Heart left ventricle (tissue), 16 donors: ENCODE measurements at regions of chr1 and their contacts with region 1.

Region 1: GRCh38 chr1:10867138-10867721 is 70.8 kb upstream of the CASZ1 start:
- DNase-seq: peak; percentile 42 to 77 (median 57)
- ATAC-seq: peak in 3 of 4 donors; percentile 38 to 81 (median 77)
- H3K4me3 ChIP-seq: peak overlapping the region in 11 of 12 donors; percentile 18 to 61 (median 49)
- H3K27ac ChIP-seq: peak overlapping the region in 2 of 12 donors; percentile 23 to 65
- H3K4me1 ChIP-seq: peaks cover 0 to 35% (median 13%) of the 10 kb centered on the region in 12 donors
- H3K27me3 ChIP-seq: peaks cover 0 to 67% (median 13%) of the 10 kb centered on the region in 9 donors
- CTCF ChIP-seq: peak; percentile 26 to 96 (median 78)
- POLR2A ChIP-seq: no peak

Region 2: DNA sequence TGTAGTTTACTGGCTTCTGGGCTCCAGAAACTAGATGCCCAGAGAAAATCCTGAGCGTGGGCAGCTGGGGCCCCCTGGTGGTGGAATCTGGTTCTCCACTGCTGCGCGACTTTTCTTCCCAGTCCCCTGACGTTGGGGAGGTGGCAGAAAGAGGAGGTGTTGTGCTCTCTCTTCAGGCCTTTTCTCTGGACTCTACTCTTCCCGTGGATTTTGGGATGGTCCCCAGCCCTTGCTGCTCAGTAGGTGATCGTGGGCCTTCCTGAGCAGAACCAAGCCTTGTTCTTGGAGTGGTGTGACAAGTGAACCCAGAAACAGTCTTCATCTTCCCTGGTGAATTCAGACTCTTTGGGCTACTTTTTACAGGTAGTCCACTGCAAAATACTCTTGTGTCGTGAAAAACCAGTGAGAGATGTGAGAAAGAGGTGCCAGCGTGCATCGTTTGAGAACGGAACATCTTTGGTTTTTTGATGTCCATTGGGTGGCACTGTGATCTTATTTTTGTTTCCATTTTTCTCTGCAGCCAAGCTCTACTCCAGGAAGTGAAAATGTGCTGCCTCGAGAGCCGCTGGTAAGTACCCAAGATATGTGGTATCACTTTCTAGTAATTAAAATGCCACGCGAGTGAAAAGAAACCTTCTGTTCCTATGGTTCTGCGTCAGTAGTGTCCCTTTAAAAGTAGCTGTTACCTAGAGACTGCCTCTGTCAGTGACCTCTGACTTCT is 372.3 kb before region 1 on chr1:
- intact Hi-C with region 1: loop called in 1 of 10 experiments (anchors 5 kb)
- DNase-seq: peak; percentile 46 to 82 (median 63)
- ATAC-seq: peak; percentile 87 to 89 (median 88)
- H3K4me3 ChIP-seq: peak overlapping the region in 9 of 12 donors; percentile 11 to 50 (median 30)
- H3K27ac ChIP-seq: peak overlapping the region in 10 of 12 donors; percentile 33 to 81 (median 58)
- H3K4me1 ChIP-seq: peaks cover 0 to 28% (median 18%) of the 10 kb centered on the region in 12 donors
- H3K27me3 ChIP-seq: no peaks in the 10 kb centered on the region
- CTCF ChIP-seq: peak; percentile 76 to 91 (median 87)
- POLR2A ChIP-seq: no peak

Region 3: DNA sequence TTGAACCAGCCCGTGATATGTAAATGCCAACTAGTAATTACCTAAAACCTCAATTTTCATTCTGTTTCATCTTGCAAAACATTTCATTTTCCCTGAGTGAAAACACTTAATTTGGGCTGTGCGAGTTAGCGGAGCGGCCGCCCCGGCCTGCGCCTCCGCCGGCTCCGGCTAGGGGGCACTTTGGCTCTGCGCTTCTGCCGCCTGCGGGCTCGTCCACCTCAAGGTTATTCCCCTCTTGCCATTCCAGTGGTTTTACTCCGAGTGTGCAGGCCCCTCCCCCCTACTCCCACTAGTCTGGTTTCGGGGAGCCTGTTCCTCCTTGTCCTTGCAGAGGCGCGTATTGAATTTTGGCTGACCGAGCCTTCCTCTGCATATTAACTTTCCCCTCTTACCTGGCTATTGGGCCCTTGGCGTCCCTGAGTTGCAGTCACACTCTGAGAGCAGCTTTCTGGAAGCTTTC is 336.9 kb before region 1 on chr1:
- intact Hi-C with region 1: loop called in 2 of 10 experiments (anchors 5 kb)
- DNase-seq: peak in 4 of 5 donors; percentile 35 to 68 (median 38)
- ATAC-seq: peak in 3 of 4 donors; percentile 17 to 61 (median 35)
- H3K4me3 ChIP-seq: no peak overlapping the region
- H3K27ac ChIP-seq: peak overlapping the region in 3 of 12 donors; percentile 3 to 71 (median 66)
- H3K4me1 ChIP-seq: peaks cover 0 to 51% (median 31%) of the 10 kb centered on the region in 12 donors
- H3K27me3 ChIP-seq: no peaks in the 10 kb centered on the region
- CTCF ChIP-seq: peak; percentile 39 to 78 (median 68)
- POLR2A ChIP-seq: no peak

Region 4: GRCh38 chr1:10646347-10646861 is 220.8 kb before region 1 on chr1:
- intact Hi-C with region 1: loop called in 3 of 10 experiments (anchors 5 to 10 kb)
- DNase-seq: peak in 4 of 5 donors; percentile 54 to 78 (median 68)
- ATAC-seq: peak; percentile 86 to 89 (median 88)
- H3K4me3 ChIP-seq: no peak overlapping the region
- H3K27ac ChIP-seq: peak overlapping the region in 6 of 12 donors; percentile 34 to 61 (median 45)
- H3K4me1 ChIP-seq: peaks cover 0 to 16% (median 0%) of the 10 kb centered on the region in 12 donors
- H3K27me3 ChIP-seq: no peaks in the 10 kb centered on the region
- CTCF ChIP-seq: peak in 3 of 12 donors; percentile 11 to 41 (median 26)
- POLR2A ChIP-seq: no peak

Region 5: DNA sequence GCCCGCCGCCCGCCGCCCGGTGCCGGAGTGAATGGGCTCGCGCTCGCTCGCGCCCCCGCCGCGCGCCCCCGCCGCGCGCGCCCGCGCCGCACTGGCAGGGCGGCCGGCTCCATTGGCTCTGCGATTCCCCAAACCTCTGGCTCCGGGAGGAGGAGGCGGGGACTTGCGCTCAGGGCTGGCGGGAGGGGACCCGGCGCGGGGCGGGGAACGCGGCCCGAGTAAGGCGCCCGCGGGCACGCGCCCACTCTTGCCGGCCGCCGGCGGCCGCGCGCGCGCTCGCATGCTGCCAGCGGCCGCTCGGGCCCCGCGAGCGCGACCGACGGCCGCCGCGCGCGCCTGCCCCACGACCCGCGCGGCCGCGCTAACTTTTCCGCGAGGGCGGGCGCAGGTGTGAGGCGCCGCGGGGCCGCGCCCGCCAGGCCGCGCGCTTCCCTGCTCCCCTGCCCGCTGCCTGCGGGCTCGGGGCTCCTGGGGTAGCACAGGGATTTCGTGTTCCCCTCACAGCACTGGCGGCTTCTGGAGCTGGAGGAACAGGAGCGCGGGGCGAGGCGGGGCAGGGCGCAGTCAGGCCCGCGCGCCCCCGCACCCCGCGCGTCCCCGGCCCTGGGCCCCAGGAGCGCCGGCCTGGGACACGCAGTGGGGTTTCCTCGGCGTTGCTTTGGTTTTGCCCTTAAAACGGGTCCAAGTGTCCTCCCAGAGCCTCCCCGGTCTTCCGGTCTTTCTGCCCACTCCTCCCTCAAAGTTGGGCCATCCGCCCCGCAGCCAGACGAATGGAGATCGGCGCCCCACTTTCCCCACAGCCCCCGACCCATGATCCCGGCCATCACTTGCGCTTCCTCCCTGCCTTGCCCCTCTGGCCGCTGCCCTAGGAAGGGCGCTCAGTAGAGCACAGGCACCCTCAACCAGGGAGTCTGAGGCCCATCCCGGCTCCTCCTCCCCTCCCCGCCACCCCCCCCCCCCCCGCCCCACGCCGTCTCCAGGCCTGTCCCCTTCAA is 172.3 kb before region 1 on chr1:
- intact Hi-C with region 1: loop called in 6 of 10 experiments (anchors 5 to 10 kb)
- DNase-seq: peak; percentile 92 to 95 (median 94)
- ATAC-seq: peak; percentile 72 to 85 (median 76)
- H3K4me3 ChIP-seq: peak overlapping the region; percentile 32 to 89 (median 56)
- H3K27ac ChIP-seq: peak overlapping the region; percentile 76 to 94 (median 88)
- H3K4me1 ChIP-seq: peaks cover 4 to 72% (median 41%) of the 10 kb centered on the region in 12 donors
- H3K27me3 ChIP-seq: no peaks in the 10 kb centered on the region
- CTCF ChIP-seq: no peak
- POLR2A ChIP-seq: no peak

Region 6: GRCh38 chr1:10824821-10825423 is 42.3 kb before region 1 on chr1:
- intact Hi-C with region 1: loop called in 1 of 10 experiments (anchors 5 kb)
- DNase-seq: no peak
- ATAC-seq: no peak
- H3K4me3 ChIP-seq: no peak overlapping the region
- H3K27ac ChIP-seq: no peak overlapping the region
- H3K4me1 ChIP-seq: peaks cover 0 to 32% (median 9%) of the 10 kb centered on the region in 12 donors
- H3K27me3 ChIP-seq: peaks cover 0 to 10% (median 0%) of the 10 kb centered on the region in 9 donors
- CTCF ChIP-seq: no peak
- POLR2A ChIP-seq: no peak

Region 7: GRCh38 chr1:10941891-10942541 is 74.8 kb after region 1 on chr1:
- intact Hi-C with region 1: no loop called
- DNase-seq: peak in 2 of 5 donors; percentile 58 to 77
- ATAC-seq: peak in 2 of 4 donors; percentile 12 to 43
- H3K4me3 ChIP-seq: no peak overlapping the region
- H3K27ac ChIP-seq: no peak overlapping the region
- H3K4me1 ChIP-seq: peaks cover 0 to 22% (median 12%) of the 10 kb centered on the region in 12 donors
- H3K27me3 ChIP-seq: peaks cover 0 to 6% (median 0%) of the 10 kb centered on the region in 9 donors
- CTCF ChIP-seq: peak; percentile 80 to 94 (median 84)
- POLR2A ChIP-seq: no peak